ENCODE measurements at regions of chr17 and their contacts with region 1.

Region 1: GRCh38 chr17:59786536-59787319 is 79.3 kb downstream of the VMP1 start:
- DNase-seq: peak in 8 of 9 donors; percentile 71 to 92 (median 86)
- ATAC-seq: peak; percentile 95
- H3K4me3 ChIP-seq: peak overlapping the region; percentile 29
- H3K4me3 Mint-ChIP-seq: peak overlapping the region; percentile 68 to 89 (median 82)
- H3K27ac ChIP-seq: peak overlapping the region; percentile 84
- H3K27ac Mint-ChIP-seq: peak overlapping the region; percentile 90 to 98 (median 96)
- H3K4me1 ChIP-seq: peaks cover 39% of the 10 kb centered on the region in 2 donors
- H3K4me1 Mint-ChIP-seq: peaks cover 21 to 62% (median 51%) of the 10 kb centered on the region in 7 donors
- H3K27me3 ChIP-seq: no peaks in the 10 kb centered on the region
- H3K27me3 Mint-ChIP-seq: peaks cover 0 to 3% (median 0%) of the 10 kb centered on the region in 5 donors

Region 2: GRCh38 chr17:59707114-59707970 is 79.4 kb before region 1 on chr17 and contains the starts of genes PTRH2 and VMP1:
- CTCF ChIA-PET with region 1: no interaction called
- POLR2A ChIA-PET with region 1: interaction called, 4 read pairs
- intact Hi-C with region 1: loop called in 1 of 2 experiments (anchors 1 kb)
- DNase-seq: peak; percentile 72 to 94 (median 83)
- ATAC-seq: peak; percentile 96
- H3K4me3 ChIP-seq: peak within 1 kb of the TSS; percentile 90
- H3K4me3 Mint-ChIP-seq: peak within 1 kb of the TSS; percentile 97 to 100 (median 99)
- H3K27ac ChIP-seq: peak within 1 kb of the TSS; percentile 90
- H3K27ac Mint-ChIP-seq: peak within 1 kb of the TSS; percentile 96 to 100 (median 99)
- H3K4me1 ChIP-seq: peaks cover 26 to 28% of the 10 kb centered on the region in 2 donors
- H3K4me1 Mint-ChIP-seq: peaks cover 39 to 86% (median 68%) of the 10 kb centered on the region in 7 donors
- H3K27me3 ChIP-seq: no peaks in the 10 kb centered on the region
- H3K27me3 Mint-ChIP-seq: no peaks in the 10 kb centered on the region
- total RNA-seq, gene PTRH2: 6.1 to 24.1 (median 15.0) TPM
- total RNA-seq, gene VMP1: 70.3 to 370 (median 82.5) TPM

Region 3: DNA sequence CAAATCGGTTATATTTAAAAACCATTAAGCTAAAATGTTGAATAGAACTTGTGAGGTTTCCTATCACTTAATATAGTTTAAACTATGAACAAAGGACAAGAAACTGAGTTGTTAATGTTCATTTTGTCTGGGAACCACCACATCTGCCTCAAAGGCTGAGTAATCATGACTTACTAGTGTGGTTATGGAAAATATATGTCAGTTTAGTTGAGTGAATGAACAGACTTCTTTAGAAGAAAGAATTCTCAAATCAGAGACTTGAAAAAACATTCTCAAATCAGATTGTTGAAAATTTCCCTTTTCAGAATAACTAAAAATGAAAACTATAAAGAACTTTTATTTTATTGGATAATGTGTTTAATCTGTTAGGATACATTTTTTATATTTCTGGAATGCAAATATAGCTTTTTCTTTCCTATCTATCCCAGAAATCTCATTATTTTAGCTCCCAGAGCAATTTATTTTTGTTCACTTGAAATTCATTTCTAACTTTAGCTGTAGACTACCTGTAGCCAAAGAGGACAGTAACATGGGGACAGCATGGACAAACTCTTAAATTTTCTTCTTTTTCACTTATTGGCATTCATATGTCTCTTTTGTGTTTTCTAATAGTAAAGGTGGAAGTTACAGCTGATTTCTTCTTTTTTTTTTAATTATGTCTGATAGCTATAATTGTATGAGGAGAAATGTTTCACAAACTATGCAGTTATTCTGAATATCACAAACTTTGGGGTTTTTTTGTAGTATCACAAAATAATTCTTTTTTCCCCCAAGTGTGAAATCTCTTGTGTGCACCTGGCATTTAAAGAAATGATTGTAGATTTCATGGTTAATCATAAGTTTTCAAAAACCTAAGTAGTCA is 24.0 kb before region 1 on chr17:
- CTCF ChIA-PET with region 1: no interaction called
- POLR2A ChIA-PET with region 1: no interaction called
- intact Hi-C with region 1: loop called in 1 of 2 experiments (anchors 1 kb)
- DNase-seq: no peak
- ATAC-seq: no peak
- H3K4me3 ChIP-seq: no peak overlapping the region
- H3K4me3 Mint-ChIP-seq: peak overlapping the region in 2 of 10 donors; percentile 3 to 61
- H3K27ac ChIP-seq: peak overlapping the region; percentile 35
- H3K27ac Mint-ChIP-seq: peak overlapping the region in 5 of 9 donors; percentile 29 to 87 (median 43)
- H3K4me1 ChIP-seq: no peaks in the 10 kb centered on the region
- H3K4me1 Mint-ChIP-seq: peaks cover 5 to 53% (median 11%) of the 10 kb centered on the region in 7 donors
- H3K27me3 ChIP-seq: no peaks in the 10 kb centered on the region
- H3K27me3 Mint-ChIP-seq: no peaks in the 10 kb centered on the region

Region 4: DNA sequence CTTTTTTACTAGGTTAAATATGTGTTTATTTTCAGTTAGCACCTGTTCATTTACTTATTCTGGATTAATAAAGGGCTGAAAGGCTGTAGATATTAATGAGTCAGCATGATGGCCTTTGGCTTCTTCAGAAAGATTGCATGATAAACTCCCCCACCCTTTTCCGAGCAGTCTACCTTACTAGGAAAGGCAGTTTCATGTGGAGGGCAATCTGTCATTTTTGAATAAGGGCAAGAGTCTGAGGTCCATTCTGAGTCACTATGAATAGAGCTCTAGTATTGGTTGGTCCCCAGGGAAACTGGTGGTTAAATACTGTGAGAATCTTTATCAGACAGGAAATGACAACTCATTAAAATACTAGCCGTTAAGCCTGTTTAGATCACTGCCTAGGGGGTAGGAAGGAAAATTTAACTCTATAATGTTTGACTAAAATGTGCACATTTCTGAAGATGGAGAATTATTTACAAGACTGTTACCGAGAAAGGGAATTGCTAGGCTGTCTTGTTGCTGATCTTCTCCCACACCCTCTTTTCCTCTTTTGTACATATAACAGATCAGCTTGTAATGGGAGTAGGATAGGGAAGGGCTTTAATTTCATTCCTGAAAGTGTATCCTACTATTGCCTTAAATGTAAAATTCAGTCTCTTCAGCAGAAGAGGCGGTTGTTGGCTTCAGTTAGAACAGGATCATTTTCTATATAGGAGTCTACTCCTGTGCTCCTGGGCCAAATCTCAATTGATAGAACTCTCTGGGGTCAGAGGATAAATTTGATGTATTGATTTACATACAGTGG is 42.7 kb after region 1 on chr17:
- CTCF ChIA-PET with region 1: no interaction called
- POLR2A ChIA-PET with region 1: interaction called, 3 read pairs
- intact Hi-C with region 1: loop called (anchors 1 to 2 kb)
- DNase-seq: peak in 1 of 9 donors; percentile 51
- ATAC-seq: peak; percentile 89
- H3K4me3 ChIP-seq: no peak overlapping the region
- H3K4me3 Mint-ChIP-seq: peak overlapping the region in 2 of 10 donors; percentile 61 to 86
- H3K27ac ChIP-seq: peak overlapping the region; percentile 50
- H3K27ac Mint-ChIP-seq: peak overlapping the region; percentile 49 to 97 (median 69)
- H3K4me1 ChIP-seq: peaks cover 14 to 46% of the 10 kb centered on the region in 2 donors
- H3K4me1 Mint-ChIP-seq: peaks cover 19 to 81% (median 43%) of the 10 kb centered on the region in 7 donors
- H3K27me3 ChIP-seq: no peaks in the 10 kb centered on the region
- H3K27me3 Mint-ChIP-seq: no peaks in the 10 kb centered on the region

Region 5: DNA sequence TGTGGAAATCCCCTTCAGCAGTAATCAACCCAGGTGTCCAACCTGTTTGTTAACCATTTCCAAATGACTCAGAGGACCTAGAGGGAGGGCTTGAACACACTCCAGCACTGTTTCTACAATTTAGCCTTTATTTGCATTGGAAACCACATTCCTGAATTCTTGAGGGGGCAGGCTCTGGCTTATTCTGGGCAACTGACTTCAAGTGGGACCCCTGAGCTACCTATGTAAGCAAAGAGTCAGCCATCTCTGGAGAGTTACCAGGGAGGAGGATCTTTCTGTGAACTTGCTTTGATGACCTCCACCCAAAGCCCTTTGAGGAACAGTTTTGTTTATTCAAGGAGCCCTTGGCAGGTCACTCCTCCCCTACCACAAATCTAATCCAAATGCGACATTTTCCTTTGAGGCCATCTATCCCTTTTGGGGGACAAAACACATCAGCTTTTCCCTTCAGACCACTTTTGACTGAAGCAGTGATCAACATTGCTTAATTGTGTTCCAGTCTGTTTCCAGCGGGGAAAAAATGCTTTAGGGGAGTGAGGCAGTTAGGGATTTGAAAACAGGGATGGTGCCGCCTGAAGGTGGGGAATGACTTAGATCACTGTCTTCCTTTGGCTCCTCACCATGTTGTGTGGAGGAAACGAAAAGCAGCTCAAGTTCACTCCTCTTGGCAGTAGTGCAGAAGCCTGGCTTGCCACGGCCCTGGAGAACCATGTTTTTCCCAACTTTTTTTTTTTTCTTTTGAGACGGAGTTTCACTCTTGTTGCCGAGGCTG is 59.9 kb after region 1 on chr17:
- CTCF ChIA-PET with region 1: no interaction called
- POLR2A ChIA-PET with region 1: interaction called, 4 read pairs
- intact Hi-C with region 1: loop called in 1 of 2 experiments (anchors 1 kb)
- DNase-seq: peak in 1 of 9 donors; percentile 34
- ATAC-seq: peak; percentile 58
- H3K4me3 ChIP-seq: no peak overlapping the region
- H3K4me3 Mint-ChIP-seq: peak overlapping the region in 6 of 10 donors; percentile 4 to 76 (median 25)
- H3K27ac ChIP-seq: peak overlapping the region; percentile 60
- H3K27ac Mint-ChIP-seq: peak overlapping the region in 8 of 9 donors; percentile 7 to 91 (median 65)
- H3K4me1 ChIP-seq: peaks cover 16 to 19% of the 10 kb centered on the region in 2 donors
- H3K4me1 Mint-ChIP-seq: peaks cover 23 to 65% (median 49%) of the 10 kb centered on the region in 7 donors
- H3K27me3 ChIP-seq: no peaks in the 10 kb centered on the region
- H3K27me3 Mint-ChIP-seq: peaks cover 0 to 3% (median 0%) of the 10 kb centered on the region in 5 donors

Region 6: DNA sequence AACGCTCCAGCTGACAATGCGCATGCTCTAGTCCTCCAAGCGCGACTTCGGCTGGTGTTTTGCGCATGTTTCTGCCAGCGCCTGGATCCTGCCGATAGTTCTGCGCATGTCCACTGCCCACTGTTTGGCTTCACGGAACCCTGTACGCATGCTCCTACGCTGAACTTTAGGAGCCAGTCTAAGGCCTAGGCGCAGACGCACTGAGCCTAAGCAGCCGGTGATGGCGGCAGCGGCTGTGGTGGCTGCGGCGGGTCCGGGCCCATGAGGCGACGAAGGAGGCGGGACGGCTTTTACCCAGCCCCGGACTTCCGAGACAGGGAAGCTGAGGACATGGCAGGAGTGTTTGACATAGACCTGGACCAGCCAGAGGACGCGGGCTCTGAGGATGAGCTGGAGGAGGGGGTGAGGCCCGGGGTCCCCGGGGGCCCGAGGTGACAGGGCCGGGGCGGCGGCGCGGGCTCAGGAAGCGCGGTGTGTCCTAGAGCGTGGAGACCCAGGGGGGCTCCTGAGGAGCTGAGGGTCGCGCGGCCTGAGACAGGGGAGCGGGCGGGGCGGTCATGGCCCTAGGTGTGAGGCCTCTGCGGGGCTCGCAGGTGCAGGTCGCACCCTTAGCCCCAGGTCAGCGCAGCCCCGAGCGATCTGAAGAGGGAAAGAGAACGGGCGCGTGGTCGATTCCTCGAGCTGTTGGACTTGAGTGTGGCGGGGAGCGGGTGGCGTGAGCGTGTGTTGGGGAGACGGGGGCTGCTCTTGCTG is 106.4 kb after region 1 on chr17 and contains the starts of genes RPS6KB1 and TUBD1:
- CTCF ChIA-PET with region 1: no interaction called
- POLR2A ChIA-PET with region 1: interaction called, 4 read pairs
- intact Hi-C with region 1: loop called in 1 of 2 experiments (anchors 1 kb)
- DNase-seq: peak; percentile 87 to 99 (median 98)
- ATAC-seq: peak; percentile 96
- H3K4me3 ChIP-seq: peak within 1 kb of the TSS; percentile 74
- H3K4me3 Mint-ChIP-seq: peak within 1 kb of the TSS; percentile 97 to 100 (median 99)
- H3K27ac ChIP-seq: peak within 1 kb of the TSS; percentile 93
- H3K27ac Mint-ChIP-seq: peak within 1 kb of the TSS; percentile 98 to 100 (median 100)
- H3K4me1 ChIP-seq: peaks cover 13 to 23% of the 10 kb centered on the region in 2 donors
- H3K4me1 Mint-ChIP-seq: peaks cover 43 to 83% (median 67%) of the 10 kb centered on the region in 7 donors
- H3K27me3 ChIP-seq: no peaks in the 10 kb centered on the region
- H3K27me3 Mint-ChIP-seq: peaks cover 0 to 4% (median 0%) of the 10 kb centered on the region in 5 donors
- total RNA-seq, gene RPS6KB1: 62.0 to 107 (median 71.5) TPM
- total RNA-seq, gene TUBD1: 8.2 to 42.1 (median 14.3) TPM